ENCODE measurements at regions of chr18 and their contacts with region 1.

Region 1: GRCh38 chr18:36419905-36420531 is 122.5 kb downstream of the FHOD3 start:
- DNase-seq: no peak
- ATAC-seq: peak in 7 of 8 donors; percentile 28 to 58 (median 45)
- H3K4me3 ChIP-seq: no peak overlapping the region
- H3K27ac ChIP-seq: peak overlapping the region in 9 of 10 donors; percentile 40 to 86 (median 79)
- H3K4me1 ChIP-seq: peaks cover 0 to 83% (median 28%) of the 10 kb centered on the region in 9 donors
- H3K27me3 ChIP-seq: no peaks in the 10 kb centered on the region
- CTCF ChIP-seq: peak in 1 of 9 donors; percentile 28

Region 2: GRCh38 chr18:36352384-36352783 is 67.6 kb before region 1 on chr18:
- intact Hi-C with region 1: loop called in 1 of 10 experiments (anchors 10 kb)
- DNase-seq: no peak
- ATAC-seq: peak in 6 of 8 donors; percentile 23 to 36 (median 32)
- H3K4me3 ChIP-seq: no peak overlapping the region
- H3K27ac ChIP-seq: peak overlapping the region in 2 of 10 donors; percentile 6 to 28
- H3K4me1 ChIP-seq: peaks cover 3 to 62% (median 21%) of the 10 kb centered on the region in 9 donors
- H3K27me3 ChIP-seq: no peaks in the 10 kb centered on the region
- CTCF ChIP-seq: no peak

Region 3: GRCh38 chr18:36376361-36376760 is 43.7 kb before region 1 on chr18:
- intact Hi-C with region 1: no loop called
- DNase-seq: no peak
- ATAC-seq: no peak
- H3K4me3 ChIP-seq: no peak overlapping the region
- H3K27ac ChIP-seq: peak overlapping the region in 1 of 10 donors; percentile 82
- H3K4me1 ChIP-seq: peaks cover 2 to 95% (median 39%) of the 10 kb centered on the region in 9 donors
- H3K27me3 ChIP-seq: peaks cover 0 to 4% (median 0%) of the 10 kb centered on the region in 7 donors
- CTCF ChIP-seq: no peak

Region 4: GRCh38 chr18:36402765-36403396 is 17.1 kb before region 1 on chr18:
- intact Hi-C with region 1: no loop called
- DNase-seq: peak; percentile 67 to 77
- ATAC-seq: peak; percentile 52 to 82 (median 72)
- H3K4me3 ChIP-seq: no peak overlapping the region
- H3K27ac ChIP-seq: peak overlapping the region; percentile 46 to 83 (median 79)
- H3K4me1 ChIP-seq: peaks cover 0 to 82% (median 47%) of the 10 kb centered on the region in 9 donors
- H3K27me3 ChIP-seq: no peaks in the 10 kb centered on the region
- CTCF ChIP-seq: peak in 3 of 9 donors; percentile 14 to 34 (median 26)

Measured in heart right ventricle (tissue), 16 donors.